Activated CD4-positive, alpha-beta memory T cell treated with anti-CD3 and anti-CD28 coated beads for 36 hours (primary cell): ENCODE measurements at regions of chr17 and their contacts with region 1.

Region 1: GRCh38 chr17:48601539-48602425 is 3.0 kb downstream of the HOXB6 start:
- DNase-seq: no peak
- H3K4me3 Mint-ChIP-seq: peak overlapping the region; percentile 3
- H3K27ac Mint-ChIP-seq: no peak overlapping the region
- H3K4me1 Mint-ChIP-seq: peaks cover 24% of the 10 kb centered on the region
- H3K27me3 Mint-ChIP-seq: peaks cover 85% of the 10 kb centered on the region

Region 2: GRCh38 chr17:48544349-48545021 is 57.3 kb before region 1 on chr17:
- CTCF ChIA-PET with region 1: no interaction called
- POLR2A ChIA-PET with region 1: no interaction called
- intact Hi-C with region 1: no loop called
- DNase-seq: peak; percentile 63
- H3K4me3 Mint-ChIP-seq: peak overlapping the region; percentile 84
- H3K27ac Mint-ChIP-seq: peak overlapping the region; percentile 96
- H3K4me1 Mint-ChIP-seq: peaks cover 40% of the 10 kb centered on the region
- H3K27me3 Mint-ChIP-seq: peaks cover 18% of the 10 kb centered on the region

Region 3: GRCh38 chr17:48586355-48587258 is 15.2 kb before region 1 on chr17:
- CTCF ChIA-PET with region 1: interaction called, 11 read pairs
- POLR2A ChIA-PET with region 1: no interaction called
- intact Hi-C with region 1: no loop called
- DNase-seq: peak; percentile 55
- H3K4me3 Mint-ChIP-seq: peak overlapping the region; percentile 88
- H3K27ac Mint-ChIP-seq: no peak overlapping the region
- H3K4me1 Mint-ChIP-seq: peaks cover 21% of the 10 kb centered on the region
- H3K27me3 Mint-ChIP-seq: peaks cover 74% of the 10 kb centered on the region

Region 4: DNA sequence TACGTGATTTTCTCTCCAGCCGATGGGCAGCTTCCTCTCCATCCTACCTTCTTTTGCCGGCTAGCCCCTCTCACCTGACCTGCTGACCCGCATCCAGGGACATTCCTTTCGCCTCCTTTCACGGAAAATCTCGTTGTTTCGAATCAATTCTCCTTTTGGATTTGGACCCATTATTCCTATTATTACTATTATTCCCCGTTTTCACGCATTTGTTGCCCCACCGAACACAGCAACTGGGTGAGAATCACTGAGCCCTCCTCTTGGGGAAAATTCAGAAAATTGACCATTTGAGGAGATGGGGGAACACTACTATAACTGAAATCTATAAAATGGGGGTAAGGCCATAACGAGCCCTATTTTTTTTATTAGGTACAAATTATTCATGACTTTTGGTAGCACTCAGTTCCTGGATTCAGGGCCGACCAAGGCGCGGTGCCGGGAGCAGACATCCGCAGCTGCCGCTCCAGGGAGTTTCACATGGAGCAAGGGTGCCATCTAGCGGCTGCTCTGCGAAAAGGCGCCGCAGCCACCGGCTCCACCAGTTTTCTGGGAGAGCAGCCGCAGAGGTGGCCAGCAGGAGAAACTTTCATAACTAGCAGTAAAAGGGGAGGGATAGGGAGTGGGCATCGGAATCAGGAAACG is 16.6 kb after region 1 on chr17:
- CTCF ChIA-PET with region 1: interaction called, 10 read pairs
- POLR2A ChIA-PET with region 1: no interaction called
- intact Hi-C with region 1: loop called (anchors 2 kb)
- DNase-seq: peak; percentile 89
- H3K4me3 Mint-ChIP-seq: peak overlapping the region; percentile 17
- H3K27ac Mint-ChIP-seq: peak overlapping the region; percentile 40
- H3K4me1 Mint-ChIP-seq: peaks cover 42% of the 10 kb centered on the region
- H3K27me3 Mint-ChIP-seq: peaks cover 89% of the 10 kb centered on the region

Region 5: DNA sequence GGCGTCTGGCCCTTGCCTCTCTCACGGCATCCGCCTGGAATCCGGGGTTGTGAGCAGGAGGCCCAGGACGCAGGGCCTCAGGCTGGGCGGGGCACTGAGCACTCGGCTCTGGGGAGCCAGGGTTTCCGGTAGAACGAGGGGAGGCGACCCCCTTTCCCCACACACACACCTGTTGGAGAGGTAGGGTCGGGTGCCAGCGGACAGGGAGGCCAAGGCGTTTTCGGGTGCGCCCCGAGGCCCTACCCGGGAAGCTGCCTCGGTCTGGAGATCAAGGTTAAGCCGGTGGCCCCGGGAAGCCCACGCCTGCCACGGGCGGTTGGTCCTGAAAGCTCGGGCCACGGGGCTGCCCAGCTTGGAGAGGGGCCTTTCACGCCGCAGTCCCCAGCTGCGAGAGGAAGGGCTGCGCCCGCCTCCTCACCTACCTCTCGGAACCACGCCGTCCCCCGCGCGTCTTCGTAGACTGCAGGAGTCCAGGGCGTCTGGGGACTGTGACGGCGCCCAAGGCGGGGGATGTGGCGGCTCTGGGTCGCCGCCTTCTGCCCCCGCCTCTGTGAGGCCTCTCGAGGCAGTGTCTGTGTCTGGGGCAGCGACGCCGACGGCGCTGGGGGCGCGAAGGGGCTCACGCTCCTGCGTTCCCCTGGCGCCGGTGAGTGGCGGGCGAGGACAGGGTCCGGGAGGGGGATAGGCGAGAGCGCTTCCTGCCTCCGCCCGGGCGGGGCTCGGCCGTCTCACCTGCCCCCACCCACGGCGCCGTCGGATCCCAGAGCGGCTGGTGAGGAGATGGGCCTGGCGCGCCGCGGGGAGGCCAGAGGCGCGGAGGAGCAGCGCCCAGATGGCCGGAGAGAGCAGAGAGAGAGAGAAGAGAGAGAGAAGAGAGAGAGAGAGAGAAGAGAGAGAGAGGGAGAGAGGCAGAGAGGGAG is 44.7 kb after region 1 on chr17:
- CTCF ChIA-PET with region 1: no interaction called
- POLR2A ChIA-PET with region 1: no interaction called
- intact Hi-C with region 1: no loop called
- DNase-seq: no peak
- H3K4me3 Mint-ChIP-seq: peak overlapping the region; percentile 9
- H3K27ac Mint-ChIP-seq: no peak overlapping the region
- H3K4me1 Mint-ChIP-seq: peaks cover 16% of the 10 kb centered on the region
- H3K27me3 Mint-ChIP-seq: peaks cover 62% of the 10 kb centered on the region